WTC11 (cell line): ENCODE measurements at regions of chrX and their contacts with region 1.

Region 1: DNA sequence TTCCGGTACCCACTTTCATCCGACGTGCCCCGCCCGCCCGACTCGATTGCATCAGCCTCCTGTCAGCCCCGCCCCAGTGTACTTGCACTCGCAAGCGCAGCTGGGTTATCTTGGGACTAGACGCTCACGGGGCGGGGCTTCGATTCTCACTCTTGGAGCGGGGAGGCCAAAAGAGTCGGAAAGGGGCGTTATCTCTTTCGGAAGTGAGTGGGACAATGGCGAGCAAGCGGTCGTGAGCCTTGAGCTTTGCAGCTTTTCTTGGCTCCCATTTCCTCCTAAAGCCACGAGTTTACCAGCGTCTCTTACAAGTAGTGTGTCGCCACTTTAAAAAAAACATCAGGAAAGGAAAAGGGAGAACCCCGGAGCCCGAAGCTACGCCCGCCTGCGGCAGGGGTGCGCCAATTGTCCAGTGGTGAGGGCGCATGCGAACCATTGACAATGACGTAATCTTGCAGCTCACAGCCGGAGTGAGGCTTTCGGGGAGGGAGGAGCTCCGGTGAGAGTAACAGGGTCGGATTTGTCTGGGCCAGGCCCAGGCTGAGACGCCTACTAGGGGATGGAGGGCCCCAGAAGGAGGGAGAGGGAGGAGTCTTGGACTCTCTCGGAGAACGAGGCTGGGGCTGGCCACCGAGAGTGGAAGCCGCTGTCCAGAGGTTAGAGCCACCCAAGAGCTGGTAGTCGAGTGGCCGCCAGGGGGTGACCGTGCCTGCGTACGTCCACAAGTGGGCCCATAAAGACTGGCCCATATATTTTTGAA is 109.5 kb downstream of the GNL3L start:
- DNase-seq: peak; percentile 94
- ATAC-seq: peak; percentile 96
- H3K4me3 Mint-ChIP-seq: peak overlapping the region; percentile 91
- H3K27ac Mint-ChIP-seq: peak overlapping the region; percentile 100
- H3K4me1 Mint-ChIP-seq: peaks cover 43% of the 10 kb centered on the region
- H3K27me3 Mint-ChIP-seq: no peaks in the 10 kb centered on the region
- CTCF ChIP-seq: no peak

Region 2: GRCh38 chrX:54540289-54540688 is 99.2 kb before region 1 on chrX:
- CTCF ChIA-PET with region 1: no interaction called
- POLR2A ChIA-PET with region 1: no interaction called
- DNase-seq: no peak
- ATAC-seq: no peak
- H3K4me3 Mint-ChIP-seq: no peak overlapping the region
- H3K27ac Mint-ChIP-seq: no peak overlapping the region
- H3K4me1 Mint-ChIP-seq: no peaks in the 10 kb centered on the region
- H3K27me3 Mint-ChIP-seq: no peaks in the 10 kb centered on the region
- CTCF ChIP-seq: no peak

Region 3: GRCh38 chrX:54551801-54552200 is 87.7 kb before region 1 on chrX:
- CTCF ChIA-PET with region 1: no interaction called
- POLR2A ChIA-PET with region 1: no interaction called
- DNase-seq: no peak
- ATAC-seq: no peak
- H3K4me3 Mint-ChIP-seq: no peak overlapping the region
- H3K27ac Mint-ChIP-seq: no peak overlapping the region
- H3K4me1 Mint-ChIP-seq: no peaks in the 10 kb centered on the region
- H3K27me3 Mint-ChIP-seq: no peaks in the 10 kb centered on the region
- CTCF ChIP-seq: no peak

Region 4: GRCh38 chrX:54786962-54787361 is 147.4 kb after region 1 on chrX:
- CTCF ChIA-PET with region 1: interaction called, 43 read pairs
- POLR2A ChIA-PET with region 1: interaction called, 5 read pairs
- DNase-seq: peak; percentile 44
- ATAC-seq: peak; percentile 84
- H3K4me3 Mint-ChIP-seq: no peak overlapping the region
- H3K27ac Mint-ChIP-seq: no peak overlapping the region
- H3K4me1 Mint-ChIP-seq: peaks cover 10% of the 10 kb centered on the region
- H3K27me3 Mint-ChIP-seq: no peaks in the 10 kb centered on the region; the same call in 1 of the 2 replicates
- CTCF ChIP-seq: no peak

Region 5: DNA sequence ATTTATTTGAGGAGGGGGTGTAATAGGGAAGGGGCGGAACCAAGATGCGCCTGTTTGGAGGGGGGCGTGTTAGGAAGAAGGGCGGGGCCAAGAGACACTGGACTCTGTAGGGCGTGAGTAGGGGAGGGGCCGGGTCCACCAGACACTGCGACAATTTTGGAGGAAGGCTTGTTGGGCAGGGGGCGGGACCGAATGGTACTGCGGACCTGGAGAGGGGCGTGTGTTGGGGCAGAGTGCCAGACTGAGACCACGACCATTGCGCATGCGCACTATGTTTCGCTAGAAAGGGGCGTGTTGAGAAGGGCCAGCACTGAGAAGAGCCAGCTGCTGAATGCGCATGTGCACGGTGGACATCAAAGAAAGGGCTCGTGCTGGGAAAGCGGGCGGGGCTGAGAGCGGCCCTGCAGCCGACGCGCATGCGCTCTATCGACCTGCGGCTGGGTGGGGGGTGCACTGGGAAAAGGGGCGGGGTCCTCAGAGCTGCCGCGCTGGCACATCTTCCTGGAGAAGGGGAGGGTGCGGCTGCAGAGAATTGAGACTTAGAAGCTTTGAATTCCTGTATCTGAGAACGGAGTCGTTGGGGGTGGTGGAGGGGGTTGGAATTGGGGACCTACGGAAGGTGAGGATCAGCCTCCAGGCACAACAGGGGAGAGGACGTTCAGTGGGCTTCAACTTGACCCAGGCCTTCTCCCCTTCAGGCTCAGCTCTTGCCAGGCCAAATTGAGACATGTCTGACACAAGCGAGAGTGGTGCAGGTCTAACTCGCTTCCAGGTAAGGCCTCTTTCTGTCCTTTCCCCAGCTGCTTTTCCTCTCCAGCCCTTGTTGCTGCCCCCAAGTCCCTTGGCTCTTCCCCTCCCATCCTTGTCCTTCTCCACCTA is 169.3 kb after region 1 on chrX:
- CTCF ChIA-PET with region 1: interaction called, 10 read pairs
- POLR2A ChIA-PET with region 1: interaction called, 12 read pairs
- DNase-seq: peak; percentile 95
- ATAC-seq: peak; percentile 96
- H3K4me3 Mint-ChIP-seq: peak overlapping the region; percentile 98
- H3K27ac Mint-ChIP-seq: peak overlapping the region; percentile 99
- H3K4me1 Mint-ChIP-seq: peaks cover 25% of the 10 kb centered on the region
- H3K27me3 Mint-ChIP-seq: peaks cover 6% of the 10 kb centered on the region
- CTCF ChIP-seq: no peak